ENCODE measurements at regions of chr19 and their contacts with region 1.

Region 1: GRCh38 chr19:50657712-50658440 is 8.6 kb downstream of the C19orf81 start:
- DNase-seq: peak; percentile 98
- H3K4me3 ChIP-seq: peak overlapping the region; percentile 70
- H3K27ac ChIP-seq: peak overlapping the region; percentile 83
- H3K4me1 ChIP-seq: peaks cover 22% of the 10 kb centered on the region
- CTCF ChIP-seq: no peak

Region 2: DNA sequence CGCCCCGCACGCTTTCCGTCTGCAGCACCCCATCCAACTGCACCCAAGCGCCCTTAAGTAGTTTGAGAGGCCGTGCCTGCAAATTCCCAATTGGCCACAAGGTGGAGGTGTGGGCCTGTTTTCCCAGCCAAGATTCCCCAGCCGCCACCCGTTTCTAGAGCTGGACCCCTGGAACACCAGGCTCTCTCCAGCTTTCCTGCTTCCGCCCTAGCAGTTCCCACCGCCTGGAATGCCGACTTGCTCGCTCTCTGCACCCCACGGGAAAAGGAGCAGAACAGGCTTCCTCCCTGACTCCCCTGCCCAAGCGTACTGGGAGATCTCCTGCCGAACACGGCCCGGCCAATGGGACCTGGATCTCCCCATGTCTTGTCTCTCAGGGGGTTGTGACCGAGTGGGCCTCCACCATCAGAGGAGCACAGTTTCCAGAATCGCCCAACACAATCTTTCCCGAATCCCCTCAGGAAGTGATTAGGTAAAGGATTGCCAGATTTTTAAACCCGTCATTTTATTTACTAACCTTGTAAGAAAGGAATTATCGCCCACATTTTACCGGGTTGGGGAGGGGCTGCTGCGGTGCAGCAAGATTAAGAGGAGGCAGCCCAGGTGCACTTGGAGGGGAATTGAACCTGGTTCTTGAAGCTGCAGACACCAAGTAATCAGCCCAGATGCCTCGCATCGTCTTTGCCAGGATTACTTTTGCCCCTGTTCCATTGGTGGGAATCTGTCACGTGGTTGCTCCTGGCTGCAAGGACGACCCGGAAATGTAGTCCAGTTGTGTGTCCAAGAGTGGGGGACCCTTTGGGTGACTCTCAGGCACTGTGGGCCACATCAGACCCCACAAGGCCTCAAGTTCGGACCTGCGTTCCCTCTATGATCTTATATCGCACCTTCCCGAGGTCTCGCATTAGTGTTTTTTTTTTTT is 289.0 kb before region 1 on chr19:
- CTCF ChIA-PET with region 1: no interaction called
- POLR2A ChIA-PET with region 1: no interaction called
- intact Hi-C with region 1: loop called (anchors 5 kb)
- DNase-seq: peak; percentile 92
- H3K4me3 ChIP-seq: peak overlapping the region; percentile 81
- H3K27ac ChIP-seq: peak overlapping the region; percentile 74
- H3K4me1 ChIP-seq: peaks cover 55% of the 10 kb centered on the region
- CTCF ChIP-seq: peak; percentile 92

Region 3: DNA sequence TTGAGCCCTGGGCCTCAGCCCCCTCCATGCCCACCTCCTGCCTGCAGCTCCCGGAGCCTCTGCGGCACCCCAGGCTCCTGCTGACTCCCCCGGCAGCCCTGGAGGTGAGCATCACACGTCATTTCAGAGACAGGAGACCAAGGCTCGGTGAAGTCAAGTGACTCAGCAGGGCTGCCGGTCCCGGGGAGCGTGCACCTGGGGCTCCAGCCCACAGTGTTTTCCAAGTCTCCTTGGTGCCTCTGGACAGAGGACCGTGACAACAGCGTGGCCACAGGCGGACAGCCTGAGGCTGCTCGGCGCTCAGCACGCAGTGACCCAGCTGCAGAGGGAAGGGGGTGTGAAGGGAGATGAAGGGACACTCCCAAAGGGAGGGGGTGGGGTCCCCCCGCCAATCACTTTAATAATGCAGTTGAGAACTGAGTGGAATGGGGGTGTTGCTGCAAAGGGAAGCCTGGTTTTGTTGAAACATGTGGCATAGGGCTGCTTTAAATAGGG is 126.7 kb before region 1 on chr19:
- CTCF ChIA-PET with region 1: no interaction called
- POLR2A ChIA-PET with region 1: no interaction called
- intact Hi-C with region 1: no loop called
- DNase-seq: no peak
- H3K4me3 ChIP-seq: no peak overlapping the region
- H3K27ac ChIP-seq: no peak overlapping the region
- H3K4me1 ChIP-seq: no peaks in the 10 kb centered on the region
- CTCF ChIP-seq: no peak

Region 4: DNA sequence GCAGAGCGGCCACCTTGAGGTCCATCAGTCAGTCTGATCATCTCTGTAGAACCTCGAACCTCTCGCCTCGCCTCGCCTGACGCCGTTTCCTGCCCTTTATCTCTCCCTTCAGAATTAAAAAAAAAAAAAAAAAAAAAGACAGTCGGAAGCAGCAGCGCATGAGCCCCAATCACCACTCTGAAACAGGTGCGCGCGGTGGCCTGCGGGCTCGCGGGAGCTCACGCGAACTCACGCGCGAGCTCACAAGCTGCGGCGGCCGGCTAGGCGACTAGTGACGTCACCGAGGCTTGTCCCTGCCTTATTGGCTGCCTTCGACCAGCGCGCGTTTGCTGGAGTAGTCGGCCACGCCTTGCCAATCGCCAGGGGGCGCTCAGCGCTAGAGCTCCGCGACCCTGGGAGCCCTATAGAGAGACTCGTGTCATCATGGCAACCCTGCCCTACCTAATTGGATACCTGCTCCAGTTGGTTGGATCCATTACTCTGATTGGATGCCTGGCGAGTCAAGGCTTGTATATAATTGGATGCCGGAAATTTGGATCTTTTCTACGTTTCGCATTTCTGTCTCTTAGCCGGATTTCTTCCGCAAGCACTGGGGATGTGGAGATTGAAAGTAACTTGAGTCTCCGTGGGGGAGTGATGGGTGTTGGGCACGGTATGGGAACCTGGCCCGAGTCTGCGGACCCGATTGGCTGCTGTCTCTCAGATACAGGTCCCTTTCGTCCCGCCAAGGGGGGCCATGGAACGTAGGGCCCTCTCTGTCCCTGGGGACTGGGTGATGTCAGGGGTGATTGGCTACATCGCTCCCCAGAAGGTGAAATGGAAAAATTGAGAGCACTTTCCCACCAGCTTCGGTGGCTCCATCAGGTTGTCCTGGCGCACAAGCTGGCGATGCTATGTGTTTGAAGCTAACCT is 49.7 kb before region 1 on chr19:
- CTCF ChIA-PET with region 1: no interaction called
- POLR2A ChIA-PET with region 1: no interaction called
- intact Hi-C with region 1: loop called (anchors 1 kb)
- DNase-seq: peak; percentile 74
- H3K4me3 ChIP-seq: no peak overlapping the region
- H3K27ac ChIP-seq: no peak overlapping the region
- H3K4me1 ChIP-seq: no peaks in the 10 kb centered on the region
- CTCF ChIP-seq: peak; percentile 76

Region 5: GRCh38 chr19:50724522-50725217 is 66.8 kb after region 1 on chr19:
- CTCF ChIA-PET with region 1: no interaction called
- POLR2A ChIA-PET with region 1: no interaction called
- intact Hi-C with region 1: loop called (anchors 2 kb)
- DNase-seq: peak; percentile 96
- H3K4me3 ChIP-seq: peak overlapping the region; percentile 76
- H3K27ac ChIP-seq: no peak overlapping the region
- H3K4me1 ChIP-seq: peaks cover 23% of the 10 kb centered on the region
- CTCF ChIP-seq: peak; percentile 76